ENCODE measurements at regions of chr1 and their contacts with region 1.

Region 1: DNA sequence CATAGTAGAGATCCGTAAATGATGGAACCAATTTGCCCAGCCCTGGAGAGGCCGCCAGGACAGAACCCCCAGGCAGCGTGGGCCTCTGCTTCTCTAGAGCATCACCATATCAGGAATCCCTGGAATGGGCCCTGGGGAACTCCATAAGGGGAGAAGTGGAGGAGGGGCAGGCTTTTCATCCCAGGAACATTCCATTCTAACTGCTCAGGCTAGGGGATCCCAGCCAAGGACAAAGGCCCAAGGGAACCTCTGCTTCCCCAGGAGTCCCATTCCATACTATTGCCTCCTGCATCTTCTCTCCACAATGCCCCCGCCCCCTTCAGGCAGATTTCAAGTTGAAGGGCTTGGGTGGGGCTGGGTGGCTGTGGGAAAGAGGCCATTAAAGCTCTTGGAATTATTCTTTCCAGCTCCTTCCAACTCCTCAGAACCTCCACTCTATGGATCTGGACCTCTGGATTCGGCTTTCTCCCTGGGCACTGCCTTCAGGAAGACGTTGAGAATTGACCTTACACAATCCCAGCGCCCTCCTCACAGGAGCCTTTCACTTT is 6.0 kb downstream of the TRNP1 start:
- DNase-seq: peak; percentile 88

Region 2: GRCh38 chr1:27044613-27045151 is 45.2 kb after region 1 on chr1:
- intact Hi-C with region 1: loop called in 1 of 2 experiments (anchors 5 kb)
- DNase-seq: peak; percentile 97

Measured in posterior vena cava (tissue), 2 donors.